ENCODE measurements at regions of chr1 and their contacts with region 1.

Region 1: DNA sequence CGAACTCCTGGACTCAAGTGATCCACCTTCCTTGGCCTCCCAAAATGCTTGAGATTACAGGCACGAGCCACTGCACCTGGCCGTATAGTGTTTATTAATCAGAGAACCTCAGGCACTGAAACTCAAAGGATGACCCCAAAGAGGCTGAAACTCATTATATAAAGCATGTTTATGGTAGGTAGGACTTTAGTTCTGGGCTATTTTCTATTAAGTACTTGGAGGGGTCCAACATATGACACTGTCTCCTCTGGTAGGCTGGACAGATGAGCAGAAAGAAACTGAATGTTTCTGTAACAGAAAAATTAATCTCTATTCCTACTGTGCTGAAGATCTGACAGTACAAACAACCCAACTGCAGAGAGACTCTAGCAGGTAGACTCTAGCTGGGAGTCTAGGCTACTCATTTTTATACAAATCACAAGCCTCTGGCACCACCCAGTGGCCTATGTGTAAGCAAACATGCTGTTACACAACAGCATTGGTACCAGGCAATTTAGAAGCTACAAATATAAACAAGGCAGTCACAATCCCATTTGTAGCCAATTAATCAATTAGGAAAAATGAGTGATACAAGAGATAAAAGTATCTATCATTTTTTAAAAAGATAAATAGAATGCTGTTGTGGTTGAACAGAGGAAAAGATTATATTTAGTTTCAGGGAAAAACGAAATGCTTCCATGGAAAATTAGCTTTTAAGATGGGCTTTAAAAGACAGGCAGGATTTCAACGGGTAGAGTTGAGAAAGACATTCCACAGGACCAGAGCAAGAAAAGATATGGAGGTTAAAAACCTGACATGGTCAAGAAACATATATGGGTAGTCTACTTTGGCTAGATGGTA is 10.4 kb downstream of the DCAF8 start:
- DNase-seq: peak; percentile 49
- H3K4me3 ChIP-seq: no peak overlapping the region
- H3K27ac ChIP-seq: no peak overlapping the region
- H3K27me3 ChIP-seq: no peaks in the 10 kb centered on the region
- CTCF ChIP-seq: peak; percentile 76

Region 2: DNA sequence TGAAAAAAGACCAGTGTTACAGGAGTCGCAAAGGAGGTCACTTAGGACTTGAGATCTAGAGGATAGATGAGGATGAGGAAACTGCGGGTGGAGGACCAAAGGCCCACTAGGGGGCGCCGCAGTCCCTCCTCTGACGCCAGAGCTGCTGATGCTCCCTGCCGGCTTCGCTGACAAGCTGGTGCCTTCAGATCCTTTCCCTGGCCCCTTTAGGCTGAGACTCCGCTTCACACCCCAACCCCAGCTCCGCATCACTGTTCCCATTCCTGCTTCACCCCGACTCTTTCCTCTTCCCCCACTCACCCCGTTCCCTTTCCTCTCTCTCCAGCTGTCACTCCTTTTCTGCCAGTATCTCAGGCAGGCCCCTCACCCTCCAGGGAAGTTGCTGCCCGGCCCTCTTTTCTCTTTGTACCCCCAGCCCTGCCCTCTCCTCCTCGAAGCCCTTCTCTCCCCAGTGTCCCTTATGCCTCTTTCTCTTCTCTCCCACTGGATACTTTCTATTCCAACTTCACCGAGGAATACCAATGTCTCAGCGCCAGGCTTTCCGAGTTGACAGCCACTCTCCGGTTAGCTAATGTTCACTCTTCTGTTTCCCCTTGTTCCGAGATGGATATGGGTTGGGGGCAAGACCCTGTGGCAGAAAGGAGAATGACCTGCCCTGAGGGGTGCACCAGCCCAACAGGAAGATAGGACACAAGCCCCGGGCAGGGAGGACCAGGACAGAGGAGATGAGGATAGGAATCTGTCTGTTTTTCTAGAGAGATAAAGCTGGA is 166.0 kb before region 1 on chr1:
- CTCF ChIA-PET with region 1: interaction called, 73 read pairs
- POLR2A ChIA-PET with region 1: interaction called, 4 read pairs
- DNase-seq: peak; percentile 32
- H3K4me3 ChIP-seq: no peak overlapping the region
- H3K27ac ChIP-seq: no peak overlapping the region
- H3K27me3 ChIP-seq: peaks cover 43% of the 10 kb centered on the region
- CTCF ChIP-seq: peak; percentile 87

Region 3: GRCh38 chr1:160108888-160109662 is 142.8 kb before region 1 on chr1:
- CTCF ChIA-PET with region 1: interaction called, 137 read pairs
- POLR2A ChIA-PET with region 1: no interaction called
- DNase-seq: no peak
- H3K4me3 ChIP-seq: no peak overlapping the region
- H3K27ac ChIP-seq: no peak overlapping the region
- H3K27me3 ChIP-seq: peaks cover 16% of the 10 kb centered on the region
- CTCF ChIP-seq: peak; percentile 55

Region 4: DNA sequence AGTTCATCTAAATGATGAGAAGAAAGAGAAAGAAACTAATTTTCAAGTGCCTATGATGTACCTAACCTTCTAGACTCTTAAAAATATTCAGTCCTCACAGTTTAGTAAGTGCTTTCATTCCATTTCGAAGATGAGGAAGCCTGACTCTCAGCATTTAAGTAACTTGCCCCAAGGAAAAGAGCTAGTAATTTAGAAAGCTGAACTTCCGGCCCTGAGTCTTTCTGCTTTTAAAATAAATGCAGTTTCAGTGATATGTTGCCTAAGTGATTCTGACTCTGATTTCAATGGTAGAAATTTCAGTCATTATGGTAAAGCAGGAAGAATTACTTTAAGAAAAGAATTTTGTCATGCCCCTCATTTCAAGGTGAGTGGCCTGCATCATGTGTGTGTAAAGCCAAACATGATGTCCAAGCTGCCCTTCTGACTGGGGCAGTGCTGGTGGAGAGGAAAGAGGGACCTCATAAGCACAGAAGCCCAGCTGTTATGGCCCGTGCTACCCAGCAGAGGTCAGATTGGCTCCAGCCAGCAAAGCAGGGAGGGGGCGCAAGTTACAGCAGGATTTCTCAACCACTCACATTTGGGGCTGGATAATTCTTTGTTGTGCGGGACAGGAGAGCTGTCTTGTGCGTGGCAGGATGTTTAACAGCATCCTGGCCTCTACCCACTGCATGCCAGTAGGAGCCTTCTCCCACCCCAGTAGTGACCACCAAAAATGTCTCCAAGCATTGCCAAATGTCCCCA is 89.8 kb before region 1 on chr1:
- CTCF ChIA-PET with region 1: interaction called, 18 read pairs
- POLR2A ChIA-PET with region 1: no interaction called
- DNase-seq: no peak
- H3K4me3 ChIP-seq: no peak overlapping the region
- H3K27ac ChIP-seq: no peak overlapping the region
- H3K27me3 ChIP-seq: peaks cover 12% of the 10 kb centered on the region
- CTCF ChIP-seq: peak; percentile 57

Region 5: DNA sequence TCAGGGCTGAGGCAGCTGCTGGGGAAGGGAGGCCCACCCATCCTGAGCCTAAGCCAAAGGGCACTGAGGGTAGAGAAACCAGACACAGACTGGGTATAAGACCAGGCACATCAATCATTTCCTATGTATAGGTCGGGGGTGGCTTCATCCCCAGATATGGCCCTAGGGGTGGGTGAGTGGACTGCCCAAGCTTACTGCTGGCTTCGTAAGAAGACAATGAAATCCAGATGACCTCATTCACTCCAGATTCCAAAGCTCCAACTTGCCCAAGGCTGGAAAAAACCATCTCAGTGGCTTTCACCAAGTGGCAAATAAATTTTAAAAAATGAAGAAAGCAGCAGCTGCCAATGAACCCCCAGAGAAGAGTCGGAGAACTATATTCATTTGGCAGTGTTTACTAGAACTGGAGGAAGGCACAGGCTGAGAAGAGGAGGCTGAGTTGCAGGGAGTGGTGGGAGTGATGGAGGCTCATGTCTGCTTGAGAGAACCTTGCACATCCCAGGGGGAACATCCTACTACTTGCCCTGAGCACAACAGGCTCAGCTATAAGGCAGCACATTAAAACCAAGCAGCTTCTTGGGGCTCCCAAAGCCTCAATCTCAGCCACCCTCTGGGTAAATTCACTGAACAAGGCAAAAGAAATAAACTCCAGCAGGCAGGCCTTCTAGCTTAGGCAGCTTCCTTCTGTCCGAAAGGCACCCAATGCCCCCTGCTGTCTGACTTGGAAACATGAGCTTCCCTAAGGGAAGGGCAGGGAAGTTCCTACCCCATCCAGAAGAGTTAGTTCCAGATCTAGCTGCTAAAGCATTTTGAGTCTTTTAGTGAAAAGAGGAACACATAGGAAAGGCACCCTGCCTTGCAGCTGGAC is 32.6 kb before region 1 on chr1:
- CTCF ChIA-PET with region 1: interaction called, 76 read pairs
- POLR2A ChIA-PET with region 1: interaction called, 5 read pairs
- DNase-seq: peak; percentile 55
- H3K4me3 ChIP-seq: no peak overlapping the region
- H3K27ac ChIP-seq: peak overlapping the region; percentile 71
- H3K27me3 ChIP-seq: no peaks in the 10 kb centered on the region
- CTCF ChIP-seq: peak; percentile 84

Region 6: GRCh38 chr1:160232911-160233310 is 19.0 kb before region 1 on chr1:
- CTCF ChIA-PET with region 1: interaction called, 27 read pairs
- POLR2A ChIA-PET with region 1: interaction called, 6 read pairs
- DNase-seq: no peak
- H3K4me3 ChIP-seq: no peak overlapping the region
- H3K27ac ChIP-seq: no peak overlapping the region
- H3K27me3 ChIP-seq: no peaks in the 10 kb centered on the region
- CTCF ChIP-seq: no peak

Region 7: DNA sequence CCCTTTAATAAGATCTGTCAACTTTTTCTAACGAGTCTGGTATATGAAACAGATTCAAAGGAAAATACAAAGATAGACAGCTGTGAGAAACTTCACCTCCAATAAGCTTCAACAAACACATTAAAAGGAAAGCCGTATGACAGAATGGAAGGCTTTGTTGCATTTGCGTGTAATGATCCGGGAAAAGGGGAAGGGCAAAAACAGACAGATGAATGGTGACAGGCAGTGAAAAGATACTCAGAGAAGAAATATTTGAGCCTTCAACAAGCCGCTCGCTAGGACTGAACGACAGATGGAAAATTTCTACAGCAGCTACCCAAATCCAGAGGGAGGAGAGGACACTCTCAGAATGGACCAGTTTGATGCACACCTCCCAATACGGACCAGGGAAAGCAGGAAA is 76.3 kb after region 1 on chr1:
- CTCF ChIA-PET with region 1: no interaction called
- POLR2A ChIA-PET with region 1: no interaction called
- DNase-seq: no peak
- H3K4me3 ChIP-seq: no peak overlapping the region
- H3K27ac ChIP-seq: no peak overlapping the region
- H3K27me3 ChIP-seq: no peaks in the 10 kb centered on the region
- CTCF ChIP-seq: no peak

Measured in AG04450 (cell line).